ENCODE measurements at regions of chr2 and their contacts with region 1.

Region 1: DNA sequence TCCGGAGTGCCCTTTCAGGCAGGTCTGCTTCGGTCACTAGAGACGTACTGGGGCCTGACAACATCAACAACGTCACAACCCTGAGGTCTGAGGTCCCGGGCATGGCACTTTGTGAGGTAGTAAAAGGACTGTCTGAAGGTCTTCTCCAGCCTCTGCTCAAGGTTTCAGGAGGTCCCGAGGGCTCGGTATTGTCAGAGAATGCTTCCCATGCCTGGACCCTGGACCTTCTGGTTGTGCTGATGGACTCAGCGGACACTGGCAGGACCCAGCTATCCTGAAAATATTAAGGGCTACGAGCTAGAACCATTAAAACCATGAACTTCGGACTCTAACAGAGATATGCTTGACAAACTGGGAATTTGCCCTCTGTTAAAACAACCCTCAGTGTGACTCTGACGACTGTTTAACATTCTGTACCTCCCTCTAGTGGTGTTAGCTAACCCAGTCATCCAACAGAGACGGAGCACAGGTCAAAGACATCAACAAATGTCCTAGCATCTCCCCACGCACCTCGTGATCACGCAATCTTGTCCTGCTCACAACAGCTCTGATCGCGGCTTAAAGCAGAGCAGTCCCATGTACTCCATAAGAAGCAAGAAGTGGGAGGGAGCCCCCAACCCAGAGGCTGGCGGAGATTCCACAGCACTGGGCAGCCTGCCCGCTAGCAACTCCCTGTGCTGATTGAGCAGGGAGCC is 96.5 kb downstream of the CCDC93 start:
- DNase-seq: peak; percentile 42 to 51
- H3K4me3 ChIP-seq: no peak overlapping the region
- H3K4me3 Mint-ChIP-seq: no peak overlapping the region
- H3K27ac Mint-ChIP-seq: no peak overlapping the region
- H3K4me1 ChIP-seq: peaks cover 3% of the 10 kb centered on the region; the same call in 1 of the 2 replicates
- H3K4me1 Mint-ChIP-seq: no peaks in the 10 kb centered on the region
- H3K27me3 ChIP-seq: no peaks in the 10 kb centered on the region
- H3K27me3 Mint-ChIP-seq: no peaks in the 10 kb centered on the region
- CTCF ChIP-seq: peak; percentile 45 to 80

Region 2: GRCh38 chr2:117814417-117815264 is 102.7 kb before region 1 on chr2 and contains the start of gene DDX18:
- CTCF ChIA-PET with region 1: interaction called, 36 read pairs
- POLR2A ChIA-PET with region 1: no interaction called
- intact Hi-C with region 1: loop called (anchors 1 kb)
- DNase-seq: peak; percentile 97
- H3K4me3 ChIP-seq: peak within 1 kb of the TSS; percentile 60
- H3K4me3 Mint-ChIP-seq: peak within 1 kb of the TSS; percentile 92
- H3K27ac Mint-ChIP-seq: peak within 1 kb of the TSS; percentile 93
- H3K4me1 ChIP-seq: peaks cover 12% of the 10 kb centered on the region
- H3K4me1 Mint-ChIP-seq: peaks cover 5% of the 10 kb centered on the region
- H3K27me3 ChIP-seq: no peaks in the 10 kb centered on the region
- H3K27me3 Mint-ChIP-seq: no peaks in the 10 kb centered on the region
- CTCF ChIP-seq: peak; percentile 96 to 99
- total RNA-seq, gene DDX18: 99.0 and 103 TPM in 2 replicates

Region 3: DNA sequence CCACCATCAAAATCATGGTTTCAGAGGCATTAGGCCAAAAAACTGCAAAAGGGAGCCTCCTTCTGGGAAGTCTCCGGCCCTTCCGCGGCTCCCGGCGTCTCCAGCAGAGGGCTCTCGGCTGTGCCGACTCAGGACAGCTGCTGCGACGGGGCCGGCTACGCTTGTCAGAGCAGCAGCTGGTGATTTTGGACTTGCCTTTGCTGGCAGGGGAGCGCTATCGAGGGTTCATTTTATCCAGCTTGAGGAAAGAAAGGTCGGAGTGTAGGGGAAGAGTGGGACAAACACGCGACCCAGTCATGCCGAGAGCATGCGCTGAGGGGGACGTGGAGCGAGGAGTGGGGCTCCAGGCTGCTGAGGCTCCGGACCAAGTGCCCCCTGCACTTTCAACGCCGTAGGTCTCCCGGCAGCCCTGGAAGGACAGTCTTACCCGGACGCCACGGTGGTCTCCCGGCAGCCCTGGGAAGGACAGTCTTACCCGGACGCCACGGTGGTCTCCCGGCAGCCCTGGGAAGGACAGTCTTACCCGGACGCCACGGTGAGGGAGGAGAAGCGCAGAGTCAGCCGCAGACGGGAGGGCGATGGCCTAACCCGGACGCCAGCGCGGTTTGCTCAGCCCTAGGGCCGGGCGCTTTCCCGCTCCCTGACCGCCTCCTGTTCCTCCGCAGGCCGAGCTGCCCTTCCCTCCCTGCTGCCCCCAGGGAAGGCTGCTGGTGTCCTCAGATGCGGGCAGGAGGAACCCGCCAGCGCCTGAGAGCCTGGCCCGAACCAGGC is 81.2 kb before region 1 on chr2:
- CTCF ChIA-PET with region 1: interaction called, 4 read pairs
- POLR2A ChIA-PET with region 1: no interaction called
- intact Hi-C with region 1: loop called (anchors 1 kb)
- DNase-seq: peak in 1 of 2 experiments; percentile 54
- H3K4me3 ChIP-seq: no peak overlapping the region
- H3K4me3 Mint-ChIP-seq: no peak overlapping the region
- H3K27ac Mint-ChIP-seq: no peak overlapping the region
- H3K4me1 ChIP-seq: peaks cover under 1% of the 10 kb centered on the region; the same call in 1 of the 2 replicates
- H3K4me1 Mint-ChIP-seq: no peaks in the 10 kb centered on the region
- H3K27me3 ChIP-seq: no peaks in the 10 kb centered on the region
- H3K27me3 Mint-ChIP-seq: no peaks in the 10 kb centered on the region
- CTCF ChIP-seq: peak; percentile 23 to 65

Measured in Caco-2 (cell line).